ENCODE measurements at regions of chr15 and their contacts with region 1.

Region 1: DNA sequence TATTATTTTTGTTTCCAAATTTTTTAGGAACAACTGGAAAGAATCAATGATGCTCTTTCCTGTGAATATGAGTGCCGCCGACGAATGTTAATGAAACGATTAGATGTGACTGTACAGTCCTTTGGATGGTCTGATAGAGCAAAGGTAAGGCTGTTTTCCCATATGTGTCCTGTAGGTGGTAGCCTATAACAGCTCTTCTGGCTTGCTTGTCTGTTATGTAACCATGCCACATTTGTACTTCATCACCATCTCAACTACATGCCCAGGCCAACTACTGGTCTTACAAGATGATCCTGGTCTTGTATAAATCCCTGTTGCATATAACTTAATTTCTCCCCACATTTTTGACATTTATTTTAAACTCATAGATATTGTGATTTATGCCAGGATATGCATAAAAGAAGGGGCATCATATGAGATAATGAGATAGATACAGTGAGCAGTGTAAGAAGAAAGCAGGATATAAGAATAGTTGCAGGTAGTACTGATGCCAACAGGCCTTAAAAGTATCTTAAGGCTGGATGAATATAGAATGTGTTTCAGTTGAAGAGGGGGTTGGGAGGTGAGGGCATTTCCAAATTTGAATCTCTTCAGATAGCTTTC is 20.3 kb downstream of the FAM98B start:
- DNase-seq: peak in 2 of 4 donors; percentile 35 to 63
- ATAC-seq: peak; percentile 99
- H3K4me3 ChIP-seq: no peak overlapping the region
- H3K27ac ChIP-seq: no peak overlapping the region
- H3K4me1 ChIP-seq: no peaks in the 10 kb centered on the region
- H3K27me3 ChIP-seq: no peaks in the 10 kb centered on the region
- CTCF ChIP-seq: peak; percentile 57 to 58

Region 2: DNA sequence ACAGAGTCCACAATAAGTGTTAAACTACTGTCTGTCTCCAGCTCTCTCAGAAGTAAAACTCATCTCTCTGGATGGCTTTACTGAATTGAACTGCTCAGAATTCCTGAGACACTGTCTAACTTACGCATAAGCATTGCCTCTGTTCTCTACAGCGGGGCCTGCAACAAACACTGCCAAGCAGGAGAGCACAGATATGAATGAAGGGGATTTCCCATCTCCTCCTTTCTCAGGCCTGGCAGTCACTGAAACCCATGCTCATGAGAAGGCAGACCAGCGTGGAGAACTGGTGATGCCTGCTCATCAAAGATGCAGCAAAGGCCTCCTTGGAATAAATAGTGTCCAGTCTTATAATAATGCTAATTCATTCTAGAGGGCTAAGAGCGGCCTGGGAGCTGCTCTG is 80.1 kb after region 1 on chr15:
- intact Hi-C with region 1: no loop called
- DNase-seq: no peak
- ATAC-seq: no peak
- H3K4me3 ChIP-seq: no peak overlapping the region
- H3K27ac ChIP-seq: no peak overlapping the region
- H3K4me1 ChIP-seq: peaks cover 0 to 7% of the 10 kb centered on the region in 2 donors
- H3K27me3 ChIP-seq: no peaks in the 10 kb centered on the region
- CTCF ChIP-seq: no peak

Region 3: DNA sequence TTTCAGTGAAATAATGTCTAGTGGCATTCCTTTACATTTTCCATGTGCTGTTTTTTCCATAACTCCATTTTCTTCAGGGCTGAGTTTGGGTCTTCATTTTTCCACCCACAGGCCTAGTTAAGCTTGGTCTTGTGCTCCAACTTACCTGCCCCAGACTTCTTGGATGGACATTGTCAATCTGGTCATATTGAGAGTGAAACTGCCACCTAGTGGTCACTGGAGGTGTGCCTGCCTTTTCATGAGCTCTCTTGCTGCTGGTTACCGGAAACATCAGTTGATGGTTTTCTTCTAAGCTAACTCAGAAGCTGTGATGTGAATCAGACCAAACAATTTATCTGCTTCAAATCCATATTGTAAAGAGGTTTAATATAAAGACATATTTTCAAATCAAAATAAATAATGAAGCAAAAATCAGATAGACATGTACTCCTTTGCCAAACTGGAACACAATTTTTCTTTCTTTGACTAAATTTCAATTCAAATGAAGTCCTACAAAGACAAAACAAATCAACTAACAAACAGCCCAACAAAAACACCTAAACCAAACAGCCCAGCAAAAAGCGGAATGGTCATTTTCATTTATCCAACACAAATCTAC is 225.5 kb after region 1 on chr15:
- intact Hi-C with region 1: loop called in 1 of 2 experiments (anchors 10 kb)
- DNase-seq: peak in 3 of 4 donors; percentile 27 to 51 (median 45)
- ATAC-seq: peak; percentile 84
- H3K4me3 ChIP-seq: no peak overlapping the region
- H3K27ac ChIP-seq: no peak overlapping the region
- H3K4me1 ChIP-seq: no peaks in the 10 kb centered on the region
- H3K27me3 ChIP-seq: no peaks in the 10 kb centered on the region
- CTCF ChIP-seq: peak; percentile 83 to 85